WTC11 (cell line): ENCODE measurements at regions of chr17 and their contacts with region 1.

Region 1: DNA sequence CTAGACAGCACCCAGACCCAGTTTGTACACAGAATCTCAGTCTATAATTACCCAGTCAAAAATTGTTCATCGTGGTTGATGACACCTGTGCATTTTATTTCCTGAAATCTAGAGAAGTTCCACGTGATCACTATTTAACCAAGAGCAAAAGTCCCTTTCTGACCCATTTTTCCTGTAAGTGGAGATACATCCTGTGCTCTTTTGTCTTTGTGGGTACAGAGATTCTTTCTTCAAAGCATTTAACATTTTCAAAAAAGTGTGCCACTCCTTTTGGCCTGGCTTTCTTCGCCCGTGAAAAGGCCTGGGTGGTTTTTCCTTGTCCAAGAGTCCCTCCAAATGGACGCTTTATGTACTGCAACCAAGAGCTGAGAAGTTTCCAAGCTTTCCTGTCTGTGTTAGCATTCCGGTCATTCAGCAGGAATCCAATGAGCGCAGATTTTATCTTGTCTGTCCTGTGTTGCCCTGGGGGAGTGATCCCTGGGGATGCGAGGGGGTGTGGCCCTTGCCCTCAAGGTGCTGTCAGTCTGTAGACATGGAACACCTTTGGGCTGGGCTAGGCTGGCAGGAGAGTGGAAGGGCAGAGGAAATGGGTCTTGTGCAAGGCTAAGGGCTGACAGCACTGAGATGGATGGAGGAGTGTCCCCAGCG is 161.1 kb upstream of the CACNG5 start:
- DNase-seq: peak; percentile 54
- ATAC-seq: peak; percentile 71
- H3K4me3 Mint-ChIP-seq: no peak overlapping the region
- H3K27ac Mint-ChIP-seq: peak overlapping the region; percentile 50; the same call in 1 of the 2 replicates
- H3K4me1 Mint-ChIP-seq: peaks cover 18% of the 10 kb centered on the region
- H3K27me3 Mint-ChIP-seq: no peaks in the 10 kb centered on the region
- CTCF ChIP-seq: peak; percentile 59

Region 2: GRCh38 chr17:66200685-66201092 is 473.1 kb before region 1 on chr17:
- CTCF ChIA-PET with region 1: interaction called, 31 read pairs
- POLR2A ChIA-PET with region 1: no interaction called
- DNase-seq: peak; percentile 48
- ATAC-seq: peak; percentile 62
- H3K4me3 Mint-ChIP-seq: no peak overlapping the region
- H3K27ac Mint-ChIP-seq: no peak overlapping the region
- H3K4me1 Mint-ChIP-seq: peaks cover 4% of the 10 kb centered on the region
- H3K27me3 Mint-ChIP-seq: peaks cover 3% of the 10 kb centered on the region; the same call in 1 of the 2 replicates
- CTCF ChIP-seq: peak; percentile 41; the same call in 1 of the 2 replicates